GM10248 (cell line): ENCODE measurements at regions of chr16 and their contacts with region 1.

Region 1: GRCh38 chr16:67017810-67018488 is 11.0 kb upstream of the CBFB start:
- DNase-seq: peak; percentile 83
- CTCF ChIP-seq: peak; percentile 86

Region 2: DNA sequence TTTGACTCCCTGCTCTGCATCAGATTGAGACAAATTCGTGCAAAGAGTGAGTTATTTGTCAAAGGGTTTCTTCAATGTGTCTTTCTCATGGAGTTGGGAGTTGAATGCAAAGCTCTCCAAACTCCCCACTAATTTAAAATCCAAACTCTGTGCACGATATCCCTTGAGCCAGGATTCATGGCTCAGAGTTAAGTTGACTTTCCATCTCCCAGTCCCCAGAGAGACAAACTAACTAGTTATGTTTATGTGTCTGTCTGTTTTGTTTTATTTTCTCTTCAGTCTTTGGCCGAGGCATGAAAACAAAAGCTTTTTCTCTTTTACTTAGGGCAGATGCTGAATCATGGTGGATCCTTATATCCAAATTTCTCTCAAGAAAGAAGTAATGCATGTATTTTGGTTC is 1221.5 kb before region 1 on chr16:
- CTCF ChIA-PET with region 1: no interaction called
- POLR2A ChIA-PET with region 1: no interaction called
- DNase-seq: no peak
- CTCF ChIP-seq: no peak

Region 3: GRCh38 chr16:66872943-66873684 is 144.8 kb before region 1 on chr16:
- CTCF ChIA-PET with region 1: no interaction called
- POLR2A ChIA-PET with region 1: no interaction called
- DNase-seq: peak; percentile 88
- CTCF ChIP-seq: peak; percentile 96

Region 4: DNA sequence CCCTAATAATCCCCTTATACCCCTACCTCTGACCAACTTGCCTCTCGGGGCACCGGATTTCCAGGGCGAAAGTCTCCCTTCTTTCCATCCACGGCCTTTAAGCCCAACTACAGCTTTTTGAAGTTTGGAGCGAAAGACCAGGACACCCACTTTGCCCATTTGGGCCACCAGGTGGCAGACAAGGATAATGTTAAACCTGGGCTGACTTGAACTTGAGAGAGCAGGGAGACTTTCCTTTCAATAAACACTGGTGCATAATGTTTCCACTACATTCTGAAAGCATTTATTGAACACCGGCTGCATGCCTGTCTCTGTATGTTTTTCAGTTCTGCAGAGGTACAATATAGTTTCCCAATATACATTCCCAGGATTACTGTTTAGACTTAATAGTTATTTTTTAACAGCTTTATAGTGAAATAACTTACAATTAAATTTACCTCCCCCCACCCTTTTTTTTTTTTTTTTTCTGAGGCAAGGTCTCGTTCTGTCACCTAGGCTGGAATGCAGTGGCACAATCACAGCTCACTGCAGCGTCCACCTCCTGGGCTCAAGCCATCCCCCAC is 63.8 kb before region 1 on chr16:
- CTCF ChIA-PET with region 1: interaction called, 32 read pairs
- POLR2A ChIA-PET with region 1: no interaction called
- DNase-seq: peak; percentile 79
- CTCF ChIP-seq: peak; percentile 84

Region 5: DNA sequence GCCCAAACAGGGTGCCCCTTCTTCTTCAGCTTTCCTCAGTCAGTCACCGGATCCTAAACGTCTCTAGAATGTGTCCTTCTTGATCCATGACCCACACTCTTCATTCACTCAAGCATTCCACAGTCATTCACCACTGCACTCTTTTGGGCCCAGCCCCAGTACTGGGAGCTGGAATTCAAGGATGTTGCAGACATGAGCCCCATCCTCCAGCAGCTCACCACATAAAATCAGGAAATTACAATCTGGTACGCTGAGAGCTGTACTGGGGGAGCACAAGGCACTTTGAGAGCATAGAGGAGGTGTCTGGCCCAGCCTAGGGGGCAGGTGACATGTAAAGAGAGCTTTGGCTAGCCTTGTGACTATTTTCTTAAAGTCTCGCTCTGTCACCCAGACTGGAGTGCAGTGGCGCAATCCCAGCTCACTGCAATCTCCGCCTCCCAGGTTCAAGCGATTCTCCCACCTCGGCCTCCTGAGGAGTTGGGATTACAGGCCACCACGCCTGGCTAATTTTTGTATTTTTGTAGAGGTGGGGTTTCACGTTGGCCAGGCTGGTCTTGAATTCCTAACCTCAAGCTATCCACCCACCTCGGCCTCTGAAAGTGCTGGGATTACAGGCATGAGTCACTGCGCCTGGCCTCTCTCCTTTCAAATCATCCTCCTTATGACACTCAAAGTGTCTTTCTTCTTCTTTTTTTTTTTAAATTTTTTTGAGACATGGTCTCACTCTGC is 10.9 kb before region 1 on chr16:
- CTCF ChIA-PET with region 1: interaction called, 17 read pairs
- POLR2A ChIA-PET with region 1: no interaction called
- DNase-seq: no peak
- CTCF ChIP-seq: no peak

Region 6: DNA sequence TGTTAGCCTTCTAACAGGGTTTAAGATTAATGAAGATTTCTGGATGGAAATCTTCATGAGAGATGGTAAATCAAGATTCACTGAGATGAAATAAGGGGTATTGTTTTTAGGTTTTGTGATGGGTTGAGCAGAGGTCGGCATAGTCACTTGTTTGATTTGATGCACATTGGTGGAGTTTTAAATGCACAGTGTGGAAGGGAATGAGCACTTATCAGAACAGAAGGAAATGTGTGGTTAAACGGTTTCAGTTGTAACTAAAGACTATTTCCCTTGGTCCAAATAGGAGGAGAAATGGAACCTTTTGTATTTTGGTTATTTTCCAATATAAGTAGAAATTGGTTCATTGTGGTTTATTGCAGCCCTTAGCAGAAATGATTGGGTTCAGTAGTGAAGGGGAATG is 45.1 kb after region 1 on chr16:
- CTCF ChIA-PET with region 1: interaction called, 12 read pairs
- POLR2A ChIA-PET with region 1: no interaction called
- DNase-seq: no peak
- CTCF ChIP-seq: no peak

Region 7: GRCh38 chr16:67104061-67104460 is 86.1 kb after region 1 on chr16:
- CTCF ChIA-PET with region 1: interaction called, 169 read pairs
- POLR2A ChIA-PET with region 1: no interaction called
- DNase-seq: no peak
- CTCF ChIP-seq: no peak

Region 8: GRCh38 chr16:67159593-67160406 is 141.9 kb after region 1 on chr16 and contains the starts of genes FBXL8 and TRADD:
- CTCF ChIA-PET with region 1: interaction called, 207 read pairs
- POLR2A ChIA-PET with region 1: no interaction called
- DNase-seq: peak; percentile 87
- CTCF ChIP-seq: peak; percentile 52

Region 9: DNA sequence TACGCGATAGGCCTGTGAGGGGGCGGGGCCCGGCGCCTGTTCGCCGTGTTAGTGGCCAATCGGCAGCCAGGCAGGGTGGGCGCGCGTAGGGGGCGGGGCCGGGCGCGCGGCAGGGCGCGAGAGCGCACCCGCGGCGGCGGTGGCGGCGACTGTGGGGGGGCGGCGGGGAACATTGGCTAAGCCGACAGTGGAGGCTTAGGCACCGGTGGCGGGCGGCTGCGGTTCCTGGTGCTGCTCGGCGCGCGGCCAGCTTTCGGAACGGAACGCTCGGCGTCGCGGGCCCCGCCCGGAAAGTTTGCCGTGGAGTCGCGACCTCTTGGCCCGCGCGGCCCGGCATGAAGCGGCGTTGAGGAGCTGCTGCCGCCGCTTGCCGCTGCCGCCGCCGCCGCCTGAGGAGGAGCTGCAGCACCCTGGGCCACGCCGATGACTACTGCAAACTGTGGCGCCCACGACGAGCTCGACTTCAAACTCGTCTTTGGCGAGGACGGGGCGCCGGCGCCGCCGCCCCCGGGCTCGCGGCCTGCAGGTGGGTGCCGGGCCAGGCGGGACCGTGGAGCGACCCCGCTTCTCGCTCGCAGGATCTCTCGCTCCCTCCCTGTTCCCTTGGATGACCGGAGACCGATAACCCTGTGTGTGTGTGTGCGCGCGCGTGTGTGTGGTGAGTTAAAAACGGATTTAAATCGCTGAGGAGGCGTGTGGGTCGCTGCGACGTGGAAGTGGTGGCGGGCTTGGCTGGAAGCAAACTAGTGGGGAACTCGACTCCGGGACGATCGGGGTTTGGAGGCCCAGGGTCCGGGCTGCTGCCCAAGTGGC is 1067.5 kb after region 1 on chr16 and contains the start of gene NFATC3:
- CTCF ChIA-PET with region 1: no interaction called
- POLR2A ChIA-PET with region 1: interaction called, 10 read pairs
- DNase-seq: peak; percentile 97
- CTCF ChIP-seq: no peak